Right lobe of liver (tissue), 6 donors: ENCODE measurements at regions of chr19 and their contacts with region 1.

Region 1: GRCh38 chr19:46990991-46991676 is 28.5 kb upstream of the NPAS1 start:
- DNase-seq: peak; percentile 79 to 86 (median 82)
- ATAC-seq: peak; percentile 70 to 78 (median 74)
- H3K4me3 ChIP-seq: no peak overlapping the region
- H3K27ac ChIP-seq: peak overlapping the region; percentile 32 to 40 (median 38)
- H3K4me1 ChIP-seq: peaks cover 0 to 35% (median 10%) of the 10 kb centered on the region in 4 donors
- H3K27me3 ChIP-seq: no peaks in the 10 kb centered on the region
- CTCF ChIP-seq: peak; percentile 74 to 87 (median 86)
- POLR2A ChIP-seq: no peak

Region 2: GRCh38 chr19:46753420-46754155 is 237.5 kb before region 1 on chr19:
- intact Hi-C with region 1: loop called (anchors 10 kb)
- DNase-seq: peak in 1 of 3 donors; percentile 66
- ATAC-seq: peak; percentile 23 to 46 (median 28)
- H3K4me3 ChIP-seq: no peak overlapping the region
- H3K27ac ChIP-seq: no peak overlapping the region
- H3K4me1 ChIP-seq: no peaks in the 10 kb centered on the region
- H3K27me3 ChIP-seq: no peaks in the 10 kb centered on the region
- CTCF ChIP-seq: peak; percentile 33 to 54 (median 50)
- POLR2A ChIP-seq: no peak

Region 3: DNA sequence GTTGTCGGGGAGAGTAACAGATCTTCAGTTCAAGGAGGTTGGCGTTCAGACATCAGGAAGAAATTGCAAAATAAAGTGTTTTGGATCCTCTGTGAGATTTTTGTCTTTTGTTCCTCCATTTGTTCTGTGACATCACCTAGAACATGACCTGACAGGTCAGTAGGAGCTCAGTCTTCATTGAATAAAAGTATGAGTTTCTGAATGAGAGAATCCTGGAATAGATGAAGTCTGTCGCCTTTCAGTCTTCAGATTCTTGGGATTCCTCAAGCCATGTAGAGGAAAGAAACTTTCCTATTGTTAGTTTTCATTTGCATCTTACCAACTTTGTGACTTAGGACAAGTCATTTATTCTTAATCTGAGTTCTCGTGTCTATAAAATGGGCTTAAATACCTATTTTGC is 115.9 kb before region 1 on chr19:
- intact Hi-C with region 1: no loop called
- DNase-seq: no peak
- ATAC-seq: peak in 1 of 4 donors; percentile 6
- H3K4me3 ChIP-seq: no peak overlapping the region
- H3K27ac ChIP-seq: peak overlapping the region; percentile 47 to 85 (median 77)
- H3K4me1 ChIP-seq: peaks cover 0 to 62% (median 11%) of the 10 kb centered on the region in 4 donors
- H3K27me3 ChIP-seq: no peaks in the 10 kb centered on the region
- CTCF ChIP-seq: no peak
- POLR2A ChIP-seq: no peak